Caco-2 (cell line): ENCODE measurements at regions of chr1 and their contacts with region 1.

Region 1: DNA sequence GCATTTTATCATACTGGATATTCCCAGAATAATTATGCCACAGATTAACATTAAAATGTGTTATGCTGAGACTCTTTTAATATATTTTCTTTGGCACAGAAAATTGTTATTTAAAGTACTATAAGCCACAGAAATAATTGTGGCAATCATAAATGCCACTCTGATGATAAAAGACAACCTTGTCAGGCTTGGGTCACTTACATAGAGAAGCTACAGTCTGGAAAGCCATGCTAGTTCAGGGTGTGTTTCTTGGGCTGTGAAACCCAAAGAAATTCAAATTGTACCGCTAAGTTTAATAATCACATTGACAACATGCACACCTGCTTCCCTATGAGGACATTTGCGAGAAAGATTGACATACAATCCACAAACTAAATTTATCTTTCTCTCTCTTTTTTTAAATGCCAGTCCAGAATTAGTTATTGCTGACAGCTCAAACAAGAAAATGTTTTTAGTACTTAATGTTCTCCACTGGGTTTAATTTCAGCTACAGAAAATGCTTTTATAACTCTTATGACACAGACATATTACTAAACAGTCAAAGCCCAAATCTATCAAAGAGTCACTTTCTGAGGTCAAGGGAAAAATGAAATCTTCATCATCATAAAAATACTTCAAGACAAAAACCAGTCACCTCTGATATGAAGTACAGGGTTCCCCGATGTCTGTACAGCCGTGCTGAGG is 38.7 kb downstream of the TTC13 start:
- DNase-seq: no peak
- H3K4me3 ChIP-seq: no peak overlapping the region
- H3K4me3 Mint-ChIP-seq: no peak overlapping the region
- H3K27ac Mint-ChIP-seq: no peak overlapping the region
- H3K4me1 ChIP-seq: peaks cover 50% of the 10 kb centered on the region
- H3K4me1 Mint-ChIP-seq: peaks cover 32% of the 10 kb centered on the region
- H3K27me3 ChIP-seq: no peaks in the 10 kb centered on the region
- H3K27me3 Mint-ChIP-seq: no peaks in the 10 kb centered on the region
- CTCF ChIP-seq: no peak

Region 2: DNA sequence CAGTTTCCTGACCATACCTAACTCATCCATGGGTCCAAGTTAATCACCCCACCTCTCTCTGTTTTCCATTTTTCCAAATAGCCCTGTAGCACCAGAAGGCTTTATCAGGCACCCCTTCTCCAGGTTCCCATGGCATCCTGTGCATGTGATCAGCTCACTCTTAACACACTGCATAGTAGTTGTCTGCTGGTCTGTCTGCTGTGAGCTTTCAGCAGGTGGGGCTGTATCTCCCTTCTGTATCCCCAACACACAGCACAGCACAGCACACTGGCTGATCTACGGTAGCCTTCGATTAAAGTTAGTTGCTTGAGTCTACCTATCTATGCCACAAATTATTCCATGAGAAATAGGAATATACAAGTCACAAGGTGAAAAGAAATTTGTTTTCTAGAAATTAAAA is 17.3 kb before region 1 on chr1:
- CTCF ChIA-PET with region 1: interaction called, 3 read pairs
- POLR2A ChIA-PET with region 1: interaction called, 6 read pairs
- intact Hi-C with region 1: loop called (anchors 1 kb)
- DNase-seq: peak in 1 of 2 experiments; percentile 27
- H3K4me3 ChIP-seq: no peak overlapping the region
- H3K4me3 Mint-ChIP-seq: no peak overlapping the region
- H3K27ac Mint-ChIP-seq: peak overlapping the region; percentile 40
- H3K4me1 ChIP-seq: peaks cover 20% of the 10 kb centered on the region
- H3K4me1 Mint-ChIP-seq: peaks cover 22% of the 10 kb centered on the region
- H3K27me3 ChIP-seq: no peaks in the 10 kb centered on the region
- H3K27me3 Mint-ChIP-seq: no peaks in the 10 kb centered on the region
- CTCF ChIP-seq: peak in 1 of 2 experiments; percentile 44

Region 3: DNA sequence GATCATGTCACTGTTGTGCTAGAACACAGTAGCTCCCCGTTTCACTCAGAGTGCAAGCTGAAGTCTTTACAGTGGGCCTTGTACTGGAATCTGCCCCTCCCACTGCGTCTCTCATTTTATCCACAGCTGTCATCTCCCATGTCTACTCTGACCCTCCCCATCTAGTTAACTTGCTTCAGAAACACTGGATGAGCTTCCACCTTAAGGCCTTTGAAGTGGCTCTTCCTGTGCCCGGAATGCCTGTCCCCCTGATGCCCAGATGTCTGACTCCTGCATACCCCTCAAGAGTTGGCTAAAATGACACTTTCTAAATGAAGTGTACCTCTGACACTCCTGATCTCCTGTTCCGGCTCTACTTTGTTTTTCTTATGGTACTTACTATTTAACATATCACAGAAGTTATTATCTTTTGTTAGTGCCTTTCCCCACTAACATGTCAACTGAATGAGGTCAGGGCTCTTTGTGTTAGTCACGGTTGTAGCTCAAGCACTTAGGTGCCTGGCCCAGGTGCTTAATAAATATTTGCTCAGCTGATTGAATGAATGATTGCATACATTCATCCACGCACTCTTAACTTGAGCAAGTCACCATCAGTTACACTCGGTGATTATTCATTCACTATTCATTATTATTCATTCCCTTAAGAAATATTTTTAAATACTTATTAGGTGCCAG is 52.3 kb after region 1 on chr1:
- CTCF ChIA-PET with region 1: no interaction called
- POLR2A ChIA-PET with region 1: no interaction called
- intact Hi-C with region 1: no loop called
- DNase-seq: no peak
- H3K4me3 ChIP-seq: no peak overlapping the region
- H3K4me3 Mint-ChIP-seq: no peak overlapping the region
- H3K27ac Mint-ChIP-seq: peak overlapping the region; percentile 60
- H3K4me1 ChIP-seq: no peaks in the 10 kb centered on the region
- H3K4me1 Mint-ChIP-seq: peaks cover 18% of the 10 kb centered on the region
- H3K27me3 ChIP-seq: no peaks in the 10 kb centered on the region
- H3K27me3 Mint-ChIP-seq: no peaks in the 10 kb centered on the region
- CTCF ChIP-seq: no peak

Region 4: DNA sequence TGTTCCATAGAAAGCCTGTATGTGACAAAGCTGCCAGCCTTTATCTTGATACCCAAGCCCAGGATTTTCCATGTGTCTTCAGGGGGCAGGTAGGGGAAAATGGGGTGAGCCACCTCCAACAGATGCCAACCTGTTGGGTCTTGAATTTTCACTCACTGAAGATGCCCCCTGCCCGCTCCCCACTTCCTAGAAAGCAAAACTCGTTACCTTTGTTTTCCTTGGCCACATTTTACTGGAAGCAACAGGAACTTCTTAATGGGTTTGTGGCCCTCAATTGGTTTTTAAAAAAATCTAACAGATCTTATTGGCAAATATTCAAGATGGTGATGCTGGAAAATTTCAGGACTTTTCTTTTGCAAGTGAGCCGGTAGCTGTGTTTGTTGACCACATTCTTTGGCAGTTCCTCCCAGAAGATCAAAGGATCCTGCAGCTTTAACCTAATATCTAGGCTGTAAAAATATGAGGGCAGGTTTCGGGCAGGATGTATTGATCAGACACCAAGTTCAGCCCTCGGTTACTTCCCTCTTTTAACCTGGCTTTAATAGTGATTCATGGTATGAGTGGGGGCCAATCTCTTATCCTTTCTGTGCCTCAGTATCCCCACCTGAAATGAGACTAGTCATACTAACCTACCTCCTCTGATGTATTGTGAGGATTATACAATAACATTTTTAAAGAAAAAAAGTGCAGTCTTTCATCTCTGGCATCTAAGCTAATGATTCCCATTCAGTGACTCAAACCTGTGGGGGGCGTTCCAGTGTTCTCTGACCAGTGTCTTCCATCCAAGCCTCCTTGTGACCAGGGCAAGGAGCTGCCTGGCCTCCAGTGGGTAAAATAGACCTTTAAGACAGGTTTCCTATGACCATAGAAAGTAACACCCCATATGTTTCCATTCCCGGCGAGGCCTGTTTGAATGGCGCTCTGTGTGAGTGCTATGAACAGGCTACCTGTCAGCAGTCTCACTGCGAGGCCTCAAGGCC is 279.8 kb after region 1 on chr1:
- CTCF ChIA-PET with region 1: no interaction called
- POLR2A ChIA-PET with region 1: no interaction called
- intact Hi-C with region 1: loop called (anchors 2 kb)
- DNase-seq: peak; percentile 62 to 67
- H3K4me3 ChIP-seq: no peak overlapping the region
- H3K4me3 Mint-ChIP-seq: peak overlapping the region; percentile 14
- H3K27ac Mint-ChIP-seq: peak overlapping the region; percentile 95
- H3K4me1 ChIP-seq: peaks cover 56% of the 10 kb centered on the region
- H3K4me1 Mint-ChIP-seq: peaks cover 39% of the 10 kb centered on the region
- H3K27me3 ChIP-seq: no peaks in the 10 kb centered on the region
- H3K27me3 Mint-ChIP-seq: no peaks in the 10 kb centered on the region
- CTCF ChIP-seq: no peak